GM18951 (cell line): ENCODE measurements at regions of chr12 and their contacts with region 1.

Region 1: GRCh38 chr12:98397316-98398105 is 117.9 kb upstream of the TMPO start:
- POLR2A ChIP-seq: no peak

Region 2: GRCh38 chr12:96571101-96571862 is 1826.2 kb before region 1 on chr12:
- in situ Hi-C with region 1: loop called (anchors 25 kb)
- POLR2A ChIP-seq: no peak

Region 3: GRCh38 chr12:97148941-97149559 is 1248.5 kb before region 1 on chr12:
- in situ Hi-C with region 1: loop called (anchors 25 kb)
- POLR2A ChIP-seq: no peak